Vagina (tissue), 2 donors: ENCODE measurements at regions of chr18 and their contacts with region 1.

Region 1: DNA sequence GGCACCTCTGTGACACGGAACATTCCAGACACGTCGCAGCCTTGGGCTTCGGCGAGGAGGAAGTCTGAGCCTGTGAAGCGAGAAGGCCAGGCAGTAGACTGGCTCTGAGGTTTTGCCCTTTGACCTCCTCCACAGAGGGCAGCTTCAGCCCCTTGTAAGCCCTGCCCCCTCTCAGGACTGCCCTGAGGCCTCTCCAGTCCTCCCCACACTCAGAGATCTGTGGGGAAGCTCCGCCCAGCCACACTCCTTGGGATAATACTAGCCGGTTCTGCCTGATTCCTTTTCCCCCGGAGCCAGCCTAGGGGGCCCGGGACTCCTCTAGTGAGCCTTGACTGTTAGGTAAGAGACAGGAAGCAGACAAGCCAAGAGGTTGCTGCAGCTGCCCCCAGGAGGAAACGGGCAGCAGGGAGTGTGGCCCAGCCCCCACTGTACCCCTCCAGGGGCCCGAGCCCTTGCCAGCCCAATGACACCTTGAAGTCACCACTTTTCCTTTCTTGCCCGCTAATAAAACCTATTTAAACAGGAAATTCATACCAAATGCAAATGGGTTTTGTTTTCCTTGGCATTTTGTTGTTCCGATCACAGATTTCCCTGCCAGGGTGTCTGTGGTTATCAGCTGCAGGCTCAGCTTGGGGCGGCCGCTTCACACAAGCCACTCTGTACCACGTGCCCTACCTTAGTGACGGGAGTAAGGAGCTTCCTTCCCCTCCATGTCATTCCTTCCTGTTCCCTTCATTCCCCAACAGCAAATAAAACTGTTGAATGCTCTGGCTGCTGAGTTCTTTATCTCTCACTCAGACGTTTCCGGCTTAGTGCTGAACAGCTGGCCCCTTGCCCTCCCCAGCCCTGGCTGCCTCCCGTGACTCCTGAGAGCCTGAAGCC is 124.7 kb downstream of the CABLES1 start:
- DNase-seq: no peak
- H3K4me3 ChIP-seq: peak overlapping the region in 1 of 2 donors; percentile 31
- H3K27ac ChIP-seq: peak overlapping the region; percentile 84
- H3K4me1 ChIP-seq: peaks cover 36% of the 10 kb centered on the region
- H3K27me3 ChIP-seq: no peaks in the 10 kb centered on the region
- CTCF ChIP-seq: no peak
- POLR2A ChIP-seq: no peak

Region 2: DNA sequence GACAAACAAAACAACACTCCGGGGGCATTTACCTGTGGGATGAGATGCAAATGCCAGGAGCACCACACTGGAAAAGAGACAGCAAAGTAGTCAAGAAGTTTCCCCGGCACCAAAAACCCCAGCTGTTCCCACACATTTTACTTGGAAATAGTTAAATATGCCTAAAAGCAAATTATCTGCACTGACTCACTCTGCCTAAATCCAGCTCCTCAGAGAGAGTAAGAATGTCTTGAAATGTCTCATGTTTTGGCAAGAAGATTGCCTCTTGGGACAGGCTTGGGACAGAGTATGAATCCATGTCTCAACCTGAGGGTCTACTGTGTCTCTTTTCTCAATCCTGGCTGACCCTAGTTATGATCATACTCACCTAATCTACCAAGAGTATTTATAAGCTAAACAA is 105.7 kb after region 1 on chr18:
- intact Hi-C with region 1: loop called (anchors 5 kb)
- DNase-seq: no peak
- H3K4me3 ChIP-seq: no peak overlapping the region
- H3K27ac ChIP-seq: peak overlapping the region; percentile 47
- H3K4me1 ChIP-seq: peaks cover 5% of the 10 kb centered on the region
- H3K27me3 ChIP-seq: no peaks in the 10 kb centered on the region
- CTCF ChIP-seq: no peak
- POLR2A ChIP-seq: no peak